A549 (cell line): ENCODE measurements at regions of chr17 and their contacts with region 1.

Region 1: DNA sequence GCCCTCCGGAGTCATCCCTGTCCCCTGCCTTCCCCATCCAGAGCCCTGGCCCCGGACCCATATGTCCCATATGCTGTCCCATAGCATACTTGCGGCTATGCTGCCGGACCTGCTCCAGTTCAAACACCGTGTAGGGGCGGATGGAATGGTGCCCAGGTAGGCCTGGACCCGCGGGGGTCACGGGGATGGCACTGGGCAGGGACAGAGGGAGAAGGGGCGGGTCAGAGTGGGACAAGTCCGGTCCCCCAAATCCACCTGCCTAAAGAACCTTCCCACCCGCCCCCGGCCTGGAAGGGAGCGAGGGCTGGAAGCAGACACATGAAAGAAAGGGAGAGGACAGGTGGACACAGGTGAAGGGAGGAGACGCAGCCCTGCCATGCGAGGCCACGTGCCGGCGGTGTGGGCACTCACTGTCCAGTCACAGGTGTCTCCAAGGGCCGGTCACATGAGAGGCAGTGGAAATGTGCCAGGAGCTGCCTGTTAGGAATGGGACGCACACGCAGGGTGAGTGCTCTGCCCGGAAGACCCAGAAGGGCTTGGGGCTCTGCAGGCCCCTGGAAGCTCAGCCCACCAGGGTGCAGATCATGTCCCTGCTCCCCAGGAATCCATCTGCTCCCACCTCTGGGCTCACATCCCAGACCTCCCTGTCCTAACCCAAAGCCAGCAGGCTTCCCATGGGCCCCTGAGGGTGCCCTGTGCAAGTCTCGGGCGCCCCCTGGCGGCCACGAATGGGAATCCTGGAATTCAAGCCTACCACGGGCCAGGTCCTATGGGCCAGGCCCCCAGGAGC is 14.0 kb downstream of the UBALD2 start:
- DNase-seq: peak; percentile 78 to 96
- ATAC-seq: peak; percentile 75 to 97
- H3K4me3 ChIP-seq: no peak overlapping the region
- H3K27ac ChIP-seq: peak overlapping the region; percentile 3; a peak in 2 of 6 replicates
- H3K4me1 ChIP-seq: peaks cover 10% of the 10 kb centered on the region
- CTCF ChIP-seq: peak; percentile 100
- EP300 ChIP-seq: no peak
- POLR2A ChIP-seq: no peak
- RAD21 ChIP-seq: peak; percentile 99

Region 2: GRCh38 chr17:75904749-75905521 is 374.2 kb before region 1 on chr17 and contains the start of gene MRPL38:
- CTCF ChIA-PET with region 1: interaction called, 15 read pairs
- POLR2A ChIA-PET with region 1: no interaction called
- DNase-seq: peak; percentile 97 to 98
- ATAC-seq: peak; percentile 96 to 97
- H3K4me3 ChIP-seq: peak within 1 kb of the TSS; percentile 87
- H3K27ac ChIP-seq: peak within 1 kb of the TSS; percentile 86 to 93
- H3K4me1 ChIP-seq: peaks cover 22% of the 10 kb centered on the region
- CTCF ChIP-seq: peak; percentile 99
- EP300 ChIP-seq: no peak
- POLR2A ChIP-seq: peak; percentile 92
- RAD21 ChIP-seq: peak; percentile 90 to 98
- polyA plus RNA-seq, gene MRPL38: 43.4 and 53.5 TPM in 2 replicates

Region 3: DNA sequence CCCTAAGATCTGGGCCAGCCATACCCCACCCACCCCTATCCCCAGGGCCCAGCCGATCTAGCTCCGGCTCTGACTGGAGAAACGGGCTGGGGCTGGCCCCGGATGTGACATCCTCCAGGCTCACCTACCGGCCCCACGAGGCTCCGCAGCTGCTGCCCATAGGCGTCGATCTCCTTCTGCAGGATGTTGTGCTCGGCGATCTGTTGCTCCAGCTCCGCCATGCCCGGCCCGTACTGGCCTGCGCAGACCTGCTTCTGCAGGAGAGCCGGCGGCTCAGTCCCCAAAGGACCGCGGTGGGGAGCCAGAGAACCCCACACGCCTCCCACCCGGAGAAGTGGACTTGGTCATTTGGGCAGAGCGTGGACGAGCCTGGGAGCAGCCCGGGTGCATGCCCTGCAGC is 256.9 kb before region 1 on chr17:
- CTCF ChIA-PET with region 1: interaction called, 23 read pairs
- POLR2A ChIA-PET with region 1: no interaction called
- DNase-seq: no peak
- ATAC-seq: no peak
- H3K4me3 ChIP-seq: no peak overlapping the region
- H3K27ac ChIP-seq: no peak overlapping the region
- H3K4me1 ChIP-seq: peaks cover 10% of the 10 kb centered on the region; the same call in 2 of the 3 replicates
- CTCF ChIP-seq: no peak
- EP300 ChIP-seq: no peak
- POLR2A ChIP-seq: no peak
- RAD21 ChIP-seq: no peak

Region 4: DNA sequence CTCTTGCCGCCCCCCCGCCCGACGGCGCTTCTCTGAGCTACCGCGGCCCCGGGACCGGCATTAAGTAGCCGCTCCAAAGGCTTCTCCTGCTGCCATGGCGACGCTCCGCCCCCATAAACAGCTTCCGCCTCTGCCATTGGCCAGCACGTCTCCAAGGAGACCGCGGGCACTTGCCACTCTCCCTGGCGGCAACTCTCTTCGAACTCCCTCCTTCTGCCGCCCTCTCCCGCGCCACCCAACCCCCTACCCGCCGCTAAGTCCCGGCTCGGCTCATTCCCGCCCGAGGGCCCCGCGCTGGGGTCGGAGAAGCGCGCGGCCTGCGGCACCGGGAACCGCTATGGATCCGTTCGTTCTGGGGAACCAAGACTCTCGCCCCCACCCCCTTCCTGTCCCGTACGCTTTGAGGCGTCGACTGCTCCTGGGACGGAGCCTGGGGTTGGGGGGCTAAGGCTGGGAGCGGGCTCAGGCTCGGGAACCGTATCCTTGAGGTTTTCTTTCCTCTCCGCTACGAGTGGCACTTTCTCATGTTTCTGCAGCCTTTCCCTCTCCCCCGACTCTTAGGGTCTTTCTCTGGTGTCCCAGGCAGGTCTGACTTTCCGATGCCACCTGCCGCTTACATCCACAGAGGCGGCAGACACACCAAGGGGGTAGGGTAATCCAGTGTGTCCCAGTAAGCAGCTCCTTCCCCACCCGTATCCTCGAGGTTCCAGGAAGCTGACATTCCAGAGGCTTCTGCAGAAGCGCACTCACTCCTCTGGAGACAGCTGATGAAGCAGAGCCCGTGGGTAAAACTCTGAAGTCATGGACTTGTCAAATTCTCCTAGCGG is 137.7 kb before region 1 on chr17 and contains the start of gene FOXJ1:
- CTCF ChIA-PET with region 1: interaction called, 755 read pairs
- POLR2A ChIA-PET with region 1: no interaction called
- DNase-seq: peak; percentile 91 to 99
- ATAC-seq: peak; percentile 77 to 92
- H3K4me3 ChIP-seq: peak within 1 kb of the TSS; percentile 47
- H3K27ac ChIP-seq: peak within 1 kb of the TSS in 1 of 2 experiments; percentile 73; a peak in 4 of 6 replicates
- H3K4me1 ChIP-seq: peaks cover 35% of the 10 kb centered on the region
- CTCF ChIP-seq: no peak
- EP300 ChIP-seq: no peak
- POLR2A ChIP-seq: no peak
- RAD21 ChIP-seq: no peak
- polyA plus RNA-seq, gene FOXJ1: 0.09 TPM in 2 replicates

Region 5: GRCh38 chr17:76182016-76182764 is 97.0 kb before region 1 on chr17:
- CTCF ChIA-PET with region 1: interaction called, 178 read pairs
- POLR2A ChIA-PET with region 1: no interaction called
- DNase-seq: peak; percentile 96 to 97
- ATAC-seq: peak; percentile 94 to 97
- H3K4me3 ChIP-seq: no peak overlapping the region
- H3K27ac ChIP-seq: peak overlapping the region in 1 of 2 experiments; percentile 29; a peak in 1 of 6 replicates
- H3K4me1 ChIP-seq: no peaks in the 10 kb centered on the region
- CTCF ChIP-seq: peak; percentile 93
- EP300 ChIP-seq: no peak
- POLR2A ChIP-seq: no peak
- RAD21 ChIP-seq: peak; percentile 74

Region 6: DNA sequence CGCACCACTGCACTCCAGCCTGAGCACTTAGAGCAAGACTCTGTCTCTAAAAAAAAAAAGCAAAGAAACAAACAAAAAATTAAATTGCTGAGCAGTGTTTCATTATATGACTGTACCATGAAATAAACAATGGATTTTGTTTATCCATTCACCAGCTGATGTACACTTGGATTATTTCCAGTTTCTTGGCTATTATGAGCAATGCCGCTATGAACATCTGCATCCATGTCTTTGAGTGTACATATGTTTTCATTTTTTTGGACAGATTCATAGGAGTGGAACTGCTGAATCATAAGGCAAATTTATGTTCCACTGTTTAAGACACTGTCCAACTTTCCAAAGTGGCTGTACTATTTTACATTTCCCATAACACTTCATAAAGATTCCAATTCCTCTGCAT is 46.8 kb before region 1 on chr17:
- CTCF ChIA-PET with region 1: interaction called, 22 read pairs
- POLR2A ChIA-PET with region 1: no interaction called
- DNase-seq: no peak
- ATAC-seq: peak in 1 of 2 experiments; percentile 62; a peak in 2 of 6 replicates
- H3K4me3 ChIP-seq: no peak overlapping the region
- H3K27ac ChIP-seq: no peak overlapping the region
- H3K4me1 ChIP-seq: peaks cover 22% of the 10 kb centered on the region
- CTCF ChIP-seq: no peak
- EP300 ChIP-seq: no peak
- POLR2A ChIP-seq: no peak
- RAD21 ChIP-seq: no peak

Region 7: DNA sequence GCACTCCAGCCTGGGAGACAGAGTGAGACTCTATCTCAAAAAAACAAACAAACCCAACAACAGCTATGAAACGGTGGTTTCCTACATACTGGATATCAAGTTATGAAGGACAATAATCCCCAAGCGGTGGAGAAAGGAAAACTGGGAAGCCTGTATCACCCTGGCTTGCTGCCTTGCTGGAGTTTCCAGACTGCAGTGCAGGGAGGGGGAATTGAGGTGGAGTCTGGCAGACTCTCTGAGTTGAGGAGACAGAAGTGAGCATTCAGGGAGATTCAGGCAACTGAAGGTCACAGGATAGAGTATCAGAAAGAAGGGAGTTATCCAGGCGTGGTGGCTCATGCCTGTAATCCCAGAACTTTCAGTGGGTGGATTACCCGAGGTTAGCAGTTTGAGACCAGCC is 17.0 kb after region 1 on chr17:
- CTCF ChIA-PET with region 1: interaction called, 285 read pairs
- POLR2A ChIA-PET with region 1: no interaction called
- DNase-seq: no peak
- ATAC-seq: no peak
- H3K4me3 ChIP-seq: no peak overlapping the region
- H3K27ac ChIP-seq: no peak overlapping the region
- H3K4me1 ChIP-seq: no peaks in the 10 kb centered on the region
- CTCF ChIP-seq: no peak
- EP300 ChIP-seq: no peak
- POLR2A ChIP-seq: no peak
- RAD21 ChIP-seq: no peak